ENCODE measurements at regions of chr1 and their contacts with region 1.

Region 1: DNA sequence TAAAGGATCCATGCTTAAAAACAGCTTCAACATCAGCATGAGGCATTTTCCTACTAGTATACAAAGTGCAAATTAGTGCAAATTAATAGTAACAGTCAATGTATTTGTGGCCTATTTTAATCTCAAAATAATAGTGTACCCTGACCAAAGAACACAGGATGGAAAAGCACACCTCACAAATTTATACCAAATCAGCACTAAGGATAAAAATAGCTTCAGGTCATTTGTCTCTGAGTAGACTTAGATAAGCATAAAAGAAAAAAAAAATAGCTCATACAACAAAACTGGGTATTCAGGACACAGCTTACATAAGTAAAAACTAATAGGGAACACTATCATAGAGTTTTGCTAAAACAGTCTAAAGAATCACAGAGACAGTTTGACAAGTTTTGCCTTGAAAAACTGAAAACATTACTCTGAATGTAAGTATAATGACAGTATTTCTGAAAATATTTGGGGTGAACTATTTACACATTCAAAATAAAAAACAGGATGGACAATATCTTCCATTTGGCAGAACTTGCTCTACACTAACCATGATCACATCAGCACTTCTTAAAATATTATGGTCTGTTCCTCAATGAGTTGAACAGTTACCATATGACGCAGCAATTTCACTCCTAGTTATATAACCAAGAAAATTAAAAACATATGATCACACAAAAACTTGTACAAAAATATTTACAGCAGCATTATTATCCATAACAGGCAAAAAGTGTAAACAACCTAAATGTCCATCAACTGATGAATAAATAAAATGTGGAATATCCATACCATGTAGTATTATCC is 46.3 kb downstream of the RNF115 start:
- DNase-seq: no peak
- H3K4me3 Mint-ChIP-seq: no peak overlapping the region
- H3K27ac Mint-ChIP-seq: no peak overlapping the region
- H3K4me1 Mint-ChIP-seq: peaks cover 14% of the 10 kb centered on the region
- H3K27me3 Mint-ChIP-seq: no peaks in the 10 kb centered on the region

Region 2: DNA sequence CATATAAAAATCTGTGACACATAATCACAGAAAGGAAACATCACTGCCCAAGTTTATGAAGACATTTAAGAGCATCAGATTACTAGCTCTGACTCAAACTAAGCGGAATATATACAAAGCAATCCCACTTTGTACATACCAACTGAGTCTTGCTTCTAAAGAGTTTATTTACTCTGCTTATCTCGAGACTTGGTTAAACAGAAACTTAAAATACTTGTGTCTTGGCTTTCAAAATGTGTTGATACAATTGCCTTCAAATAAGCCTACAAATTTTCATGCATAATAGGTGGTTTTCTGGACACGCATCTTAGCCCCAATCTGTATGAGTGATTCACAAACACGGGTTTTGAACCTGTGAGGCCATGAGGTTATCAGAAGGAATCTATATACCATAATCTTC is 37.3 kb before region 1 on chr1:
- intact Hi-C with region 1: loop called (anchors 5 kb)
- DNase-seq: no peak
- H3K4me3 Mint-ChIP-seq: no peak overlapping the region
- H3K27ac Mint-ChIP-seq: no peak overlapping the region
- H3K4me1 Mint-ChIP-seq: no peaks in the 10 kb centered on the region
- H3K27me3 Mint-ChIP-seq: no peaks in the 10 kb centered on the region

Region 3: GRCh38 chr1:145765574-145765973 is 12.0 kb before region 1 on chr1:
- intact Hi-C with region 1: no loop called
- DNase-seq: no peak
- H3K4me3 Mint-ChIP-seq: no peak overlapping the region
- H3K27ac Mint-ChIP-seq: no peak overlapping the region
- H3K4me1 Mint-ChIP-seq: no peaks in the 10 kb centered on the region
- H3K27me3 Mint-ChIP-seq: no peaks in the 10 kb centered on the region

Region 4: GRCh38 chr1:145823565-145824498 is 46.3 kb after region 1 on chr1 and contains the starts of genes POLR3C and RNF115:
- intact Hi-C with region 1: loop called (anchors 10 kb)
- DNase-seq: peak; percentile 96
- H3K4me3 Mint-ChIP-seq: peak within 1 kb of the TSS; percentile 91
- H3K27ac Mint-ChIP-seq: peak within 1 kb of the TSS; percentile 93
- H3K4me1 Mint-ChIP-seq: peaks cover 40% of the 10 kb centered on the region
- H3K27me3 Mint-ChIP-seq: no peaks in the 10 kb centered on the region
- total RNA-seq, gene POLR3C: 35.0 and 39.0 TPM in 2 replicates
- total RNA-seq, gene RNF115: 14.1 and 15.5 TPM in 2 replicates